ENCODE measurements at regions of chr9 and their contacts with region 1.

Region 1: DNA sequence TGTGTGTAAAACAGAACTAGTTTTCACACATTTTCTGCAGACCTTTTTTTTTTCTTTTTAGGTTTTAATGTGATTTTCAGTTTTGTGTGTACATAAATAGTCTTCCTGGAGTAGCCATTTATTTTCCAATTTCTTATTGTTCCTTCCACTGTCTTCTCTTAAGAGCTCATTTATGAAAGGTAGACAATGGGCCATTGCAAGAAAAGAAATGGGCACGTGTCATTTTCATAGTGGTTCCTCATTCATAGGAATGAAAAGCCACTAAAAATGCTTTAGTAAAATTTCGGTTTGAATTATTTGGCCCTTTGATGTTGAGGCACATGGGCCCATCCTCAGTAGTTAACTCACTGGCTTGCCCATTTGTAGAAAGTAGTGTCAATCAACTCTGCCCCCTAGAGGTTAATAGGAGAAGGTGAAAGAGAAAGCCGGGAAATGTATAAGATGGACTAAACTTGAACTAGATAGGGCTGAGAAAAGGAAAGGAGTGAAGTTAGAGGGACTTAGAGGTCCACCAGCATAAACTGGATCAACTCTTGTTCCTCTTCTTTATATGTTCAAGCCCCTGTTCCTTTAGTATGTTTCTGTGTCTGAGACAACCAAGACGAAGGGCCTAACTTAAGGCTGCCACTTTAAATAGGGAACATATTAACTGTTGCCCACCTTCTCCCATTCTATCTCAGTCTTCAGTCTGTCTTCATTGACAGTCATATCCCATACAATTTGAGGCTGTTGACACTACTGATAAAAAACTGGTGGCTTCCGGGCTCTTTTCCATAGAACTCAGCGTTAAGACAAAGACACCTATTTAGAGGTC is 72.6 kb downstream of the SMARCA2 start:
- DNase-seq: peak in 2 of 9 experiments; percentile 59 to 72
- ATAC-seq: peak; percentile 98
- H3K4me3 ChIP-seq: no peak overlapping the region
- H3K4me3 Mint-ChIP-seq: no peak overlapping the region
- H3K27ac ChIP-seq: no peak overlapping the region
- H3K27ac Mint-ChIP-seq: no peak overlapping the region
- H3K4me1 ChIP-seq: no peaks in the 10 kb centered on the region
- H3K4me1 Mint-ChIP-seq: peaks cover 12% of the 10 kb centered on the region
- H3K27me3 ChIP-seq: no peaks in the 10 kb centered on the region
- H3K27me3 Mint-ChIP-seq: no peaks in the 10 kb centered on the region
- CTCF ChIP-seq: peak; percentile 86

Region 2: GRCh38 chr9:1018121-1018701 is 1069.5 kb before region 1 on chr9:
- CTCF ChIA-PET with region 1: no interaction called
- POLR2A ChIA-PET with region 1: no interaction called
- intact Hi-C with region 1: loop called in 1 of 2 experiments (anchors 10 kb)
- DNase-seq: peak in 1 of 9 experiments; percentile 22
- ATAC-seq: no peak
- H3K4me3 ChIP-seq: no peak overlapping the region
- H3K4me3 Mint-ChIP-seq: no peak overlapping the region
- H3K27ac ChIP-seq: no peak overlapping the region
- H3K27ac Mint-ChIP-seq: no peak overlapping the region
- H3K4me1 ChIP-seq: no peaks in the 10 kb centered on the region
- H3K4me1 Mint-ChIP-seq: no peaks in the 10 kb centered on the region
- H3K27me3 ChIP-seq: peaks cover 0 to 4% of the 10 kb centered on the region in 2 experiments
- H3K27me3 Mint-ChIP-seq: peaks cover 38% of the 10 kb centered on the region
- CTCF ChIP-seq: no peak

Region 3: DNA sequence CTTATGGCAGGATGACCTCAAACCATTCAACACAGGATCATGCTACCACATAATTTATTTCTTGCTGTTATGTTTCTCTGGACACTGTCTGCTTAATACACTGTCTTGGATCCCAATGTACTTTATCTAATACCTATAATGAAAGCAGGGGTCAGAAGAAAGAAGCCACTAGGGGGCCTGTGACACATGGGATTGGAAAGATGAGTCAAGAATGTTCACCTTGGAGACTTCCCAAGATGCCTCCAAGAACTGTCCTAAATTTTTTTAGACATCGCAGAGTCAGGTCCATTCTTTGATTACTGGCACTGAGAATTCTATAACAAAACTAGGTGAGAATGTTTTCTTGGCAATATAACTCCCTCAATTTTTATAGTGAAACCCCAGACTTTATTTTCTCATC is 378.4 kb before region 1 on chr9:
- CTCF ChIA-PET with region 1: interaction called, 9 read pairs
- POLR2A ChIA-PET with region 1: no interaction called
- intact Hi-C with region 1: loop called (anchors 1 to 2 kb)
- DNase-seq: peak in 2 of 9 experiments; percentile 19 to 37
- ATAC-seq: no peak
- H3K4me3 ChIP-seq: no peak overlapping the region
- H3K4me3 Mint-ChIP-seq: no peak overlapping the region
- H3K27ac ChIP-seq: no peak overlapping the region
- H3K27ac Mint-ChIP-seq: no peak overlapping the region
- H3K4me1 ChIP-seq: no peaks in the 10 kb centered on the region
- H3K4me1 Mint-ChIP-seq: no peaks in the 10 kb centered on the region
- H3K27me3 ChIP-seq: no peaks in the 10 kb centered on the region
- H3K27me3 Mint-ChIP-seq: peaks cover 15% of the 10 kb centered on the region
- CTCF ChIP-seq: no peak

Region 4: DNA sequence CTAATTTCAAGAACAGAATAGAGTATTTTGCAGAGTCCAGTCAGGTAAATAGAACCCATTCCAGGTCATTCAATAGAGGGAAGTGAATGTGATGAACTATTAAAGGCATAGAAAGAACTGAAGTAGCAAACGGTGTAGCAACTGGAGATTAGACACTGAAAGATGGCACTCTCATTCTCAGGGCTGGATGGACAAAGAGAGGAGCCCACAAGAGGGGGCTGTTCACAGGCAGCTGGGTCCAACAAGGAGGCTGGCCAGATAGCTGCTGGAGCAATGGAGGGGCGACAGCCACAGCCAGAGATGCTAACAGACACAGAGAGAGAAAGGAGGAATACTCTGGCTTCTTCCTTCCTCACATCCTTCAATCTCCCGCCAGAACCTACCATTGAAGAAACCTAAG is 165.7 kb before region 1 on chr9:
- CTCF ChIA-PET with region 1: interaction called, 4 read pairs
- POLR2A ChIA-PET with region 1: interaction called, 3 read pairs
- intact Hi-C with region 1: loop called in 1 of 2 experiments (anchors 5 kb)
- DNase-seq: peak in 2 of 9 experiments; percentile 7 to 8
- ATAC-seq: no peak
- H3K4me3 ChIP-seq: no peak overlapping the region
- H3K4me3 Mint-ChIP-seq: no peak overlapping the region
- H3K27ac ChIP-seq: no peak overlapping the region
- H3K27ac Mint-ChIP-seq: no peak overlapping the region
- H3K4me1 ChIP-seq: no peaks in the 10 kb centered on the region
- H3K4me1 Mint-ChIP-seq: no peaks in the 10 kb centered on the region
- H3K27me3 ChIP-seq: no peaks in the 10 kb centered on the region
- H3K27me3 Mint-ChIP-seq: peaks cover 9% of the 10 kb centered on the region
- CTCF ChIP-seq: no peak

Region 5: DNA sequence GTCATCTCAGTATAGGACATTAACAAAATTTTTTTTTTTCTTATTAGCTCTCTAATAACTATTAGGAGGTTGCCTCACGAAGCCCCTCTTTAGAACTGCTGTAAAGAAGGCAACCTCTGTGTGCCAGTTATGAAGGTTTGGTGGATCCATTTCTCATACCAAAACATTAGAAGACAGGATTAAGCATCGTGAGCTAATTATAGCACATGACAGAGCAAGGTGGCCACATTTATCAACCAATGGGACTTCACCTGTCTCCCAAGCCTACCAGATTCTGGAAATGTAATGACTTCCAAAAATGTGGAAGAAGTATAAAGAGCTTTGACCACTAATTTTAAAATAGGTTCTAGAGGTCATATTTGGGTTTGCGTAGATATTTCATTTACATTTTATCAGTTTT is 34.6 kb after region 1 on chr9:
- CTCF ChIA-PET with region 1: no interaction called
- POLR2A ChIA-PET with region 1: no interaction called
- intact Hi-C with region 1: no loop called
- DNase-seq: no peak
- ATAC-seq: no peak
- H3K4me3 ChIP-seq: no peak overlapping the region
- H3K4me3 Mint-ChIP-seq: no peak overlapping the region
- H3K27ac ChIP-seq: no peak overlapping the region
- H3K27ac Mint-ChIP-seq: no peak overlapping the region
- H3K4me1 ChIP-seq: peaks cover 18% of the 10 kb centered on the region
- H3K4me1 Mint-ChIP-seq: peaks cover 33% of the 10 kb centered on the region
- H3K27me3 ChIP-seq: no peaks in the 10 kb centered on the region
- H3K27me3 Mint-ChIP-seq: no peaks in the 10 kb centered on the region
- CTCF ChIP-seq: no peak

Measured in CD8-positive, alpha-beta T cell (primary cell).